Prostate gland (tissue), 2 donors: ENCODE measurements at regions of chr11 and their contacts with region 1.

Region 1: DNA sequence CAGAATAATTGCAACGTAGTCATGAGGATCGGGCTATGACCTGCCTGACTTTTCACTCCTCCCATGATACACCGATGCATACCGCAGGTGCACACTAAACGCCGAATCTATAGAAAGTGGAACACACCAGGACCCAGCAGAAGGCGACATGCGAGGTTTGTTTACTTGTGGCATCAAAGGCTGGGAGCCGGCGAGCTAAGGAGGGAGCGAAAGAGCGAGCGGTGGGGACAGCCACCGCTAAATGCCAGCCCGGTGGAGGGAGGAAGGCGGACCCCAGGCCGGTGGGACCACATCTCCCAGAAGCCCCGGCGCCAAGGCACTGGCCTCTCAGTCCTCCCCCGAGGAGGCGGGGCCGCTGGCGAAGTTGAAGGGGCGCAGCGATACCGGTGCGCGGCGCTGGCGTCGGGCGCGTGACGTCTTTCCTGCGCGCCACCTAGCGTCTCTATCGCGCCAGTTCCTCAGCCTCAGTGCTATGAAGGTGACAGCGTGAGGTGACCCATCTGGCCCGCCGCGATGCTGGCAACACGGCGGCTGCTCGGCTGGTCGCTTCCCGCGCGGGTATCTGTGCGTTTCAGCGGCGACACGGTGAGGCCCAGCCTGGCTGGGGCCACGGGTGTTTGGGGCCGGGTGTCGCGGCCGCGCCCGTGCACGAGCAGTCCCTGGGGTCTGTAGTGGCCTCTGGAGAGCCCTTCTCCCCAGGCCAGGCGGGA is at the start of gene NDUFV1:
- DNase-seq: peak; percentile 94
- H3K4me3 ChIP-seq: peak within 1 kb of the TSS; percentile 54 to 94
- H3K27ac ChIP-seq: peak within 1 kb of the TSS; percentile 47 to 76
- H3K4me1 ChIP-seq: peaks cover 8% of the 10 kb centered on the region
- H3K27me3 ChIP-seq: no peaks in the 10 kb centered on the region
- CTCF ChIP-seq: peak; percentile 51 to 95 (median 86)
- POLR2A ChIP-seq: peak; percentile 73
- total RNA-seq, gene NDUFV1: 190 to 260 TPM

Region 2: GRCh38 chr11:67265633-67266423 is 340.8 kb before region 1 on chr11:
- intact Hi-C with region 1: no loop called
- DNase-seq: peak; percentile 70
- H3K4me3 ChIP-seq: no peak overlapping the region
- H3K27ac ChIP-seq: peak overlapping the region; percentile 67 to 76
- H3K4me1 ChIP-seq: peaks cover 27% of the 10 kb centered on the region
- H3K27me3 ChIP-seq: no peaks in the 10 kb centered on the region
- CTCF ChIP-seq: peak; percentile 76 to 97 (median 86)
- POLR2A ChIP-seq: no peak

Region 3: DNA sequence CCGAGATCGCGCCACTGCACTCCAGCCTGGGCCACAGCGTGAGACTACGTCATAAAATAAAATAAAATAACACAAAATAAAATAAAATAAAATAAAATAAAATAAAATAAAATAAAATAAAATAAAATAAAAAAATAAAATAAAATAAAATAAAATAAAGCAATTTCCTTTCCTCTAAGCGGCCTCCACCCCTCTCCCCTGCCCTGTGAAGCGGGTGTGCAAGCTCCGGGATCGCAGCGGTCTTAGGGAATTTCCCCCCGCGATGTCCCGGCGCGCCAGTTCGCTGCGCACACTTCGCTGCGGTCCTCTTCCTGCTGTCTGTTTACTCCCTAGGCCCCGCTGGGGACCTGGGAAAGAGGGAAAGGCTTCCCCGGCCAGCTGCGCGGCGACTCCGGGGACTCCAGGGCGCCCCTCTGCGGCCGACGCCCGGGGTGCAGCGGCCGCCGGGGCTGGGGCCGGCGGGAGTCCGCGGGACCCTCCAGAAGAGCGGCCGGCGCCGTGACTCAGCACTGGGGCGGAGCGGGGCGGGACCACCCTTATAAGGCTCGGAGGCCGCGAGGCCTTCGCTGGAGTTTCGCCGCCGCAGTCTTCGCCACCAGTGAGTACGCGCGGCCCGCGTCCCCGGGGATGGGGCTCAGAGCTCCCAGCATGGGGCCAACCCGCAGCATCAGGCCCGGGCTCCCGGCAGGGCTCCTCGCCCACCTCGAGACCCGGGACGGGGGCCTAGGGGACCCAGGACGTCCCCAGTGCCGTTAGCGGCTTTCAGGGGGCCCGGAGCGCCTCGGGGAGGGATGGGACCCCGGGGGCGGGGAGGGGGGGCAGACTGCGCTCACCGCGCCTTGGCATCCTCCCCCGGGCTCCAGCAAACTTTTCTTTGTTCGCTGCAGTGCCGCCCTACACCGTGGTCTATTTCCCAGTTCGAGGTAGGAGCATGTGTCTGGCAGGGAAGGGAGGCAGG is 23.1 kb before region 1 on chr11 and contains the start of gene GSTP1:
- intact Hi-C with region 1: loop called (anchors 2 kb)
- DNase-seq: peak; percentile 84
- H3K4me3 ChIP-seq: peak within 1 kb of the TSS; percentile 66 to 76
- H3K27ac ChIP-seq: peak within 1 kb of the TSS; percentile 96 to 99
- H3K4me1 ChIP-seq: peaks cover 4% of the 10 kb centered on the region
- H3K27me3 ChIP-seq: no peaks in the 10 kb centered on the region
- CTCF ChIP-seq: peak; percentile 45 to 88 (median 72)
- POLR2A ChIP-seq: peak; percentile 96
- total RNA-seq, gene GSTP1: 540 to 577 TPM